ENCODE measurements at regions of chr1 and their contacts with region 1.

Region 1: GRCh38 chr1:210400043-210400840 is 71.5 kb downstream of the HHAT start:
- DNase-seq: peak; percentile 33
- H3K4me3 ChIP-seq: no peak overlapping the region
- H3K27ac ChIP-seq: no peak overlapping the region
- H3K27me3 ChIP-seq: no peaks in the 10 kb centered on the region
- CTCF ChIP-seq: peak; percentile 97

Region 2: DNA sequence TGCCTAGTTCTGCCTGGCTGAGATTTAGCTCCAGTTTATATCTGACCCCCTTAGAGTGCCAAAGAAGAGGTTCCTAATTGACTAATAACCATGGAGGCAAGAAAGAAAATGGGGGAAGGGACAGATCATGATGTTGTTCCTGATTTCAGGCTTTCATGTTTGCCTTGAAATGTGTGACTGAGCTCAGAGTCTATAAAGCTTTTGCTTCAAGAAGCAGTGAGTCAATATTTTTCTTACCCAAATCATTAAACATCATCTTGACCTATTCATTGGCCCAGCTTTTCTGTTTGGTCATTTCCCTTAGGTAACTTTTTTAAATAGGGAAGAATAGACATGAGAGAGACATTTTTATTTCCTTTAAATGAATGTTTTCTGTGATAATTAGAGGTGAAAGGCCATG is 15.6 kb before region 1 on chr1:
- CTCF ChIA-PET with region 1: interaction called, 24 read pairs
- POLR2A ChIA-PET with region 1: no interaction called
- DNase-seq: no peak
- H3K4me3 ChIP-seq: no peak overlapping the region
- H3K27ac ChIP-seq: no peak overlapping the region
- H3K27me3 ChIP-seq: no peaks in the 10 kb centered on the region
- CTCF ChIP-seq: no peak

Region 3: GRCh38 chr1:210428696-210429095 is 28.5 kb after region 1 on chr1:
- CTCF ChIA-PET with region 1: no interaction called
- POLR2A ChIA-PET with region 1: no interaction called
- DNase-seq: no peak
- H3K4me3 ChIP-seq: no peak overlapping the region
- H3K27ac ChIP-seq: no peak overlapping the region
- H3K27me3 ChIP-seq: no peaks in the 10 kb centered on the region
- CTCF ChIP-seq: no peak